ENCODE measurements at regions of chr3 and their contacts with region 1.

Region 1: DNA sequence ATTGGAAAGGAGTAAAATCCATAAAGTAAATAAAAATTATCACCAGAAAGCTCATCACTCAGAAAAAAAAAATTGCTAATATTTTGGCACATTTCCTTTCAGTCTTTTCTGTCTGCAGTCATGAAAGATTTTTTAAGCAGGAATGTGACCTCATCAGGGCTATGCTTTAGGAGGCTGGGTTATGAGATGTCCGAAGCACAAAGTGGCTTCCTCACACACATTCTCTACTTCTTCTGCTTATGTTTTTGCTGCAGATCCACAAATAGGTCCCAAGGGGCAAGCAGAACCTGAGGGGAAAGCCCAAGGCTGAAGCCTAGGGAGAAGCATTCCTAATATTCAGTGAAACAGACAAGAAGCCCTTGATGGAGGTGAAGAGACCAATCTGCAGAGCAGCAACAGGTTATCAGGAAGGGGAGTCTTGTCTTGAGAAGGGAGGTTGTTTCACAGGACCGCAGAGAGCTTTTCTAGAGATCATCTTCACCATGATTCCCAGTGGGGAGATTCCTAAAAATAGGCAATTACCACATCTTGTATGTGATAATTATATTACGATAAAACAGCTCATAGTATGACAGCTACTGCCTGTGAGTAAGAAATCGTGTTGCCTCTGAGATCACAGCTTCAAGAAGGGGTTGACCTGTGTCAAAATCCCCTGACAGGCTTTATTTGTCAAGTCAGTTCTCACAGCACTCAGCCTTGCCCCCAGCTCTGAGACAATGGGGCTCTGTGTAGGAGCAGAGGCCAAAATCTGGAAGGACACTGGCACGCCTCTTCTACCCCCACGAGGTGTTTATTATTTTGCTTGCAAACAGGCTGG is 60.5 kb downstream of the IGF2BP2 start:
- H3K4me3 Mint-ChIP-seq: no peak overlapping the region
- H3K27ac Mint-ChIP-seq: peak overlapping the region; percentile 35
- H3K4me1 Mint-ChIP-seq: peaks cover 41% of the 10 kb centered on the region
- H3K27me3 Mint-ChIP-seq: no peaks in the 10 kb centered on the region

Region 2: DNA sequence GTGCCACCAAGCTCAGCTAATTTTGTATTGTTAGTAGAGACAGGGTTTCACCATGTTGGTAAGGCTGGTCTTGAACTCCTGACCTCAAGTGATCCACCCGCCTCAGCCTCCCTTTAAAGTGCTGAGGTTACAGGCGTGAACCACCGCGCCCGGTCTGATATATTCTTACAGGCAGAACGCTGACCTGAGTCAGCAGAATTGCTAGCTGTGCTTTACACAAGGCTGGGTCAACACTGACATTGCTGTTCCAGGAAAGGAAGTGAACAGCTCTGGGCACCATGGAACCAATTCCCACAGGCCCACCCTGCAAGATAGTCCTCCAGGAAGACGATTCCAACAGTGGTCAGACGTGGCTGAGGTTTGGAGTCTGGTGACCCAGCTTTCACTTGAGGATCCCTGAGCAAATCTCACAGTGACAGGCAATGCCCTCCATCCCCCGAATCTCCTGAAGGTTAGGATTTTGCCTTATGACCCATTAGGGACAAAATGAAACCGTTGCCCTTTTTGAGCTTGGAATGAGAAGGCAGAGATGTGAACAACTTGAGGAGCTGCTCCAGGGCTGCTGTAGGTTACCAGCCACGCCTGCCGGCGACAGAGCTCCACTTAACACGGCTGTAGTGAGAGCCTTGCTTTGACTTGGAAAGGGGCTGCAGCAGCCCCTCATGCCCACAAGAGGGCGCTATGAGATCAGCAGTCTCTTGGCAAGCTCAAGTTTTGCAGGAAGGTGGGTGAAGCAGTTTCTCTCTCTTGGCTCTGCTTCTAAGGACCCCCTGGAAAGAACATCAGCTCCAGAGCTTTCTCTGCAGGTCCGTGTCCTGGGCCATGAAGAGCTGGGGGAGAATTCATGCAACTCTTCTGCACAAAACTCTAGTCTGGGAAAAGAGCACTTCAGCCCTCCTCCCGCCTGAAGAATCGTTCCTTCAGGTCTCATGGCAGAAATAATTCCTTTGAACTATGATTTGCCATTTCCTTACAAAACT is 104.1 kb before region 1 on chr3:
- intact Hi-C with region 1: loop called (anchors 1 kb)
- H3K4me3 Mint-ChIP-seq: peak overlapping the region; percentile 37
- H3K27ac Mint-ChIP-seq: peak overlapping the region; percentile 20
- H3K4me1 Mint-ChIP-seq: peaks cover 31% of the 10 kb centered on the region
- H3K27me3 Mint-ChIP-seq: no peaks in the 10 kb centered on the region

Region 3: DNA sequence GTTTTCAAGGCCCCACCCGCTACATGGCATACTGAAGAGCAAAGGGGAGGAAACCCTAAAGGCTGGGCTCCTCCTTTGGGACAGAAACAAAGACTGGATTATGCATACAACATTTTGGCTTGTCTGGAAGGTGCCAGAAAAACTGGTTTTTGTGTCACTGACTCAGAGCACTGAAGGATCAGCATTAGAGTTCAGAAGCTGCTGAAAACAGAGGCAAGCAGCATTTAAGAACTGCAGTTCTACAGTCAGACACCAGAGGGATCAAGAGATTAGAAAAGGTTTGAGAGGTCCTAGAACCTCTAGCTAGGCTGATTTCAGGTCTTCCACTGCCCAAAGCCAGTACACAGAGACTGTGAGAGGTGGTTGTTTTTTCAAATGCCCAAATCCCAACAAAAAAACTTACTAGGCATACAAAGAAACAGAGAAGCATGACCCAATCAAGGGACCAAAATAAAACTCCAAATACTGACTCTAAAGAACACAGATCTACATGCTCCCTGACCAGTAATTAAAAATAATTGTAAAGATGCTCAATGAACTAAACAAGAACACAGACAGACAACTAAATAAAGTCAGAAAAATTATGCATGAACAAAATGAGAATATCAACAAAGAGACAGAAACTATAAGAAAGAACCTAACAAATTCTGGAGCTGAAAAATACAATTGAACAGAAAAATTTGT is 87.1 kb before region 1 on chr3:
- intact Hi-C with region 1: loop called (anchors 1 kb)
- H3K4me3 Mint-ChIP-seq: no peak overlapping the region
- H3K27ac Mint-ChIP-seq: no peak overlapping the region
- H3K4me1 Mint-ChIP-seq: peaks cover 8% of the 10 kb centered on the region
- H3K27me3 Mint-ChIP-seq: no peaks in the 10 kb centered on the region